Posterior cingulate gyrus (tissue), 11 donors: ENCODE measurements at regions of chr3 and their contacts with region 1.

Region 1: GRCh38 chr3:50299929-50300685 is 902 bp upstream of the HYAL3 start:
- DNase-seq: peak in 4 of 10 donors; percentile 26 to 88 (median 46)

Region 2: GRCh38 chr3:50321336-50322114 is 21.4 kb after region 1 on chr3:
- intact Hi-C with region 1: loop called (anchors 2 kb)
- DNase-seq: peak; percentile 84 to 99 (median 90)

Region 3: DNA sequence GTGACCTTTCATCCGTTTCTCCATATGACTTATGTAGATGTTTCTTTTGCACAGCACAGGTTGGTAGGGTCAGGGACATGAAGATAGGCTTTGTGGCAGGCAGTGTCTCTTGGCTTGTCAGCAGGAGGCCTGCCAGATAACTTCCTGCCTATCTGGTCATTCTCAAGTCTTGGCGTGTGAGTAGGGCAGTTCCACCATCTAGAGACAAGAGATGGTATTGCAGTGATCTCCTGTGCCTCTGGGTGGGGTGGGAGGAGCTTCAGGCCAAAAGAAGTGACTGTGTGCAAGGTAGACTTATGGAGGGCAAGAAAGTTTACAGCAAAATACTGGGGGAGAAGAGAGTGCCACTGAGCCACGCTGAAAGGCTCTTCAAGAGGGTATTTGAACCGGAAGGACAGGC is 1382.0 kb after region 1 on chr3:
- intact Hi-C with region 1: no loop called
- DNase-seq: peak in 6 of 10 donors; percentile 25 to 93 (median 50)